Activated CD4-positive, alpha-beta T cell treated with anti-CD3 and anti-CD28 coated beads, Interleukin-2, amount 10 ng/mL, durations not matched to agents 24 days and 14 days (primary cell): ENCODE measurements at regions of chr2 and their contacts with region 1.

Region 1: DNA sequence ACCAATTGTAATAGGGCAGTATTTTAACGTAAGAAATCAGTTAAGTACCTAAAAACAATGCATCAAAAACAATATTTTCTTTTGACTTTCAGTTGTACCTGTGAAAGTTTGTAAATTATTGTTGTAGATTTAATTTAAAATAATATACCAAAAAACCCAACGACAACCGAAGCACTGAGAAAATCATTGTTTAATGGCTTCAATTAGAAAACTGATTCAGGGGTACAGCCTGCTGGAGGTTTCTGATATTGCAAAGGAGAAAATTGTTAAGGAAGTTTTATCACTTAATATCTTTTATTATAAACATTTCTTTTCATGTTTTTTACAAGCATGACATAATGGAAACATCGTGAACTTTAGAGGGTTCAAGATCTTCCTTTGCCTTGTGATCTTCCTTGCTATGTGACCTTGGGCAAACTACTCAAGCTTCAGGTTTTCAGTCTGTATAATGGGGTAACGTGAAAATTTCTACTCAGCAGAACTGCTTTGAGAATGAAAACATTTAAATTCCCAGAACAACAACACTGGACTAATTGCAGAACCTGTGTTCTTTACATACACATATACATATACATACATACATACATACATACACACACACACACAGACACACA is 76.3 kb upstream of the GLS start:
- DNase-seq: no peak
- H3K4me3 Mint-ChIP-seq: no peak overlapping the region
- H3K27ac Mint-ChIP-seq: no peak overlapping the region
- H3K4me1 Mint-ChIP-seq: peaks cover 12% of the 10 kb centered on the region
- H3K27me3 Mint-ChIP-seq: no peaks in the 10 kb centered on the region

Region 2: GRCh38 chr2:190023861-190024260 is 780.4 kb before region 1 on chr2:
- intact Hi-C with region 1: loop called (anchors 10 kb)
- DNase-seq: peak; percentile 68
- H3K4me3 Mint-ChIP-seq: no peak overlapping the region
- H3K27ac Mint-ChIP-seq: no peak overlapping the region
- H3K4me1 Mint-ChIP-seq: no peaks in the 10 kb centered on the region
- H3K27me3 Mint-ChIP-seq: peaks cover 23% of the 10 kb centered on the region

Region 3: GRCh38 chr2:190088917-190089316 is 715.4 kb before region 1 on chr2:
- intact Hi-C with region 1: loop called (anchors 5 kb)
- DNase-seq: peak; percentile 84
- H3K4me3 Mint-ChIP-seq: no peak overlapping the region
- H3K27ac Mint-ChIP-seq: no peak overlapping the region
- H3K4me1 Mint-ChIP-seq: no peaks in the 10 kb centered on the region
- H3K27me3 Mint-ChIP-seq: peaks cover 5% of the 10 kb centered on the region

Region 4: DNA sequence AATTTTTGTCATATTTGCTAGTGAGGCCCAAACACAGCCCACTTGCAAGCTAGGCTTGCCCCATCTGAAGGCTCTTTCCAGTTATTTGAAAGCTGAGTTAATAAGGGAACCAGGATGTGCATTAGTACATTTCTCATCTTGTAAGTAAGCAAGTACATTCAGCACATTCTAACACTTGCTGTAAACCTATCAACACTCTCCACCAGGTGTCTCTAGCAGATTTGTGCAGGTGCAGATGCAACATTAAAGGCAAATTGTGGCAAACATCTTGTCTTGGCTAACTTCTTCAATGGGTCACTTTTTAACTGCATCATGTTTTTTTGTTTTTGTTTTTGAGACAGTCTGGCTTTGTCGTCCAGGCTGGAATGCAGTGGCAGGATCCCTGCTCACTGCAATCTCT is 421.4 kb before region 1 on chr2:
- intact Hi-C with region 1: loop called (anchors 1 kb)
- DNase-seq: peak; percentile 83
- H3K4me3 Mint-ChIP-seq: no peak overlapping the region
- H3K27ac Mint-ChIP-seq: no peak overlapping the region
- H3K4me1 Mint-ChIP-seq: peaks cover 5% of the 10 kb centered on the region
- H3K27me3 Mint-ChIP-seq: peaks cover 6% of the 10 kb centered on the region

Region 5: DNA sequence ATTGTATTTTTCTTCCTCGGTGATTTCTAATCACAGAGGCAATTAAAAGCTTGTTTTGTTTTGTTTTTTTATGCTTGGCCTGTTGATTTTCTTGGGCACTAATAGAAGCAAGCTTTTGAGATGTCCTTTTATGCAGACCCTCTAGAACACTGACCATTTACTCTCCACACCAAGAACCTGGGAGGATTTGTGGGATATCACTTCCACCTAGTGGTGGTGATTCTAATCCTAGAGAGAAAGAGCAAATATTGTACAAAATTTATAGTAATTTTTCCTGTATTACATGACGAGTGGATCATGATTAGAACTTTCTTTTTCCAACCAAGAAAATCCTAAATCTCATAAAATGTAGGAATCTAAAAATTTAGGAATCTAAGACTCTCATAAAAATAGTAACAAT is 293.2 kb before region 1 on chr2:
- intact Hi-C with region 1: loop called (anchors 10 kb)
- DNase-seq: no peak
- H3K4me3 Mint-ChIP-seq: no peak overlapping the region
- H3K27ac Mint-ChIP-seq: no peak overlapping the region
- H3K4me1 Mint-ChIP-seq: peaks cover 22% of the 10 kb centered on the region
- H3K27me3 Mint-ChIP-seq: no peaks in the 10 kb centered on the region

Region 6: GRCh38 chr2:190781604-190782198 is 22.6 kb before region 1 on chr2:
- intact Hi-C with region 1: loop called (anchors 1 kb)
- DNase-seq: peak; percentile 85
- H3K4me3 Mint-ChIP-seq: no peak overlapping the region
- H3K27ac Mint-ChIP-seq: no peak overlapping the region
- H3K4me1 Mint-ChIP-seq: peaks cover 38% of the 10 kb centered on the region
- H3K27me3 Mint-ChIP-seq: no peaks in the 10 kb centered on the region